Esophagus muscularis mucosa (tissue), 4 donors: ENCODE measurements at regions of chr17 and their contacts with region 1.

Region 1: GRCh38 chr17:47949136-47949759 is 7.9 kb downstream of the PNPO start:
- DNase-seq: peak; percentile 95
- H3K4me3 ChIP-seq: peak overlapping the region; percentile 35 to 52 (median 42)
- H3K27ac ChIP-seq: peak overlapping the region; percentile 47 to 73 (median 66)
- H3K4me1 ChIP-seq: peaks cover 19 to 49% (median 26%) of the 10 kb centered on the region in 4 donors
- H3K27me3 ChIP-seq: no peaks in the 10 kb centered on the region
- CTCF ChIP-seq: peak; percentile 83 to 93 (median 88)
- EP300 ChIP-seq: no peak
- POLR2A ChIP-seq: no peak

Region 2: GRCh38 chr17:47970704-47971463 is 21.6 kb after region 1 on chr17 and contains the start of gene CDK5RAP3:
- intact Hi-C with region 1: loop called (anchors 2 kb)
- DNase-seq: peak; percentile 100
- H3K4me3 ChIP-seq: peak within 1 kb of the TSS; percentile 71 to 95 (median 87)
- H3K27ac ChIP-seq: peak within 1 kb of the TSS; percentile 80 to 89 (median 84)
- H3K4me1 ChIP-seq: peaks cover 7 to 28% (median 21%) of the 10 kb centered on the region in 4 donors
- H3K27me3 ChIP-seq: peaks cover 0 to 9% (median 0%) of the 10 kb centered on the region in 4 donors
- CTCF ChIP-seq: peak; percentile 92 to 100 (median 96)
- EP300 ChIP-seq: no peak
- POLR2A ChIP-seq: no peak
- total RNA-seq, gene CDK5RAP3: 43.9 to 70.2 (median 58.4) TPM

Region 3: GRCh38 chr17:47990962-47991731 is 41.9 kb after region 1 on chr17:
- intact Hi-C with region 1: no loop called
- DNase-seq: no peak
- H3K4me3 ChIP-seq: no peak overlapping the region
- H3K27ac ChIP-seq: no peak overlapping the region
- H3K4me1 ChIP-seq: peaks cover 0 to 13% (median 12%) of the 10 kb centered on the region in 4 donors
- H3K27me3 ChIP-seq: peaks cover 0 to 17% (median 0%) of the 10 kb centered on the region in 4 donors
- CTCF ChIP-seq: no peak
- EP300 ChIP-seq: no peak
- POLR2A ChIP-seq: no peak

Region 4: GRCh38 chr17:48001197-48001596 is 51.9 kb after region 1 on chr17:
- intact Hi-C with region 1: no loop called
- DNase-seq: no peak
- H3K4me3 ChIP-seq: no peak overlapping the region
- H3K27ac ChIP-seq: no peak overlapping the region
- H3K4me1 ChIP-seq: peaks cover 5 to 22% (median 19%) of the 10 kb centered on the region in 4 donors
- H3K27me3 ChIP-seq: peaks cover 0 to 36% (median 0%) of the 10 kb centered on the region in 4 donors
- CTCF ChIP-seq: no peak
- EP300 ChIP-seq: no peak
- POLR2A ChIP-seq: no peak

Region 5: GRCh38 chr17:48011405-48012150 is 62.3 kb after region 1 on chr17:
- intact Hi-C with region 1: loop called (anchors 5 kb)
- DNase-seq: no peak
- H3K4me3 ChIP-seq: peak overlapping the region; percentile 39 to 57 (median 43)
- H3K27ac ChIP-seq: no peak overlapping the region
- H3K4me1 ChIP-seq: peaks cover 10 to 17% (median 14%) of the 10 kb centered on the region in 4 donors
- H3K27me3 ChIP-seq: peaks cover 0 to 79% (median 23%) of the 10 kb centered on the region in 4 donors
- CTCF ChIP-seq: peak in 2 of 3 experiments; percentile 16 to 47
- EP300 ChIP-seq: no peak
- POLR2A ChIP-seq: no peak